Sigmoid colon (tissue), 7 donors: ENCODE measurements at regions of chr1 and their contacts with region 1.

Region 1: DNA sequence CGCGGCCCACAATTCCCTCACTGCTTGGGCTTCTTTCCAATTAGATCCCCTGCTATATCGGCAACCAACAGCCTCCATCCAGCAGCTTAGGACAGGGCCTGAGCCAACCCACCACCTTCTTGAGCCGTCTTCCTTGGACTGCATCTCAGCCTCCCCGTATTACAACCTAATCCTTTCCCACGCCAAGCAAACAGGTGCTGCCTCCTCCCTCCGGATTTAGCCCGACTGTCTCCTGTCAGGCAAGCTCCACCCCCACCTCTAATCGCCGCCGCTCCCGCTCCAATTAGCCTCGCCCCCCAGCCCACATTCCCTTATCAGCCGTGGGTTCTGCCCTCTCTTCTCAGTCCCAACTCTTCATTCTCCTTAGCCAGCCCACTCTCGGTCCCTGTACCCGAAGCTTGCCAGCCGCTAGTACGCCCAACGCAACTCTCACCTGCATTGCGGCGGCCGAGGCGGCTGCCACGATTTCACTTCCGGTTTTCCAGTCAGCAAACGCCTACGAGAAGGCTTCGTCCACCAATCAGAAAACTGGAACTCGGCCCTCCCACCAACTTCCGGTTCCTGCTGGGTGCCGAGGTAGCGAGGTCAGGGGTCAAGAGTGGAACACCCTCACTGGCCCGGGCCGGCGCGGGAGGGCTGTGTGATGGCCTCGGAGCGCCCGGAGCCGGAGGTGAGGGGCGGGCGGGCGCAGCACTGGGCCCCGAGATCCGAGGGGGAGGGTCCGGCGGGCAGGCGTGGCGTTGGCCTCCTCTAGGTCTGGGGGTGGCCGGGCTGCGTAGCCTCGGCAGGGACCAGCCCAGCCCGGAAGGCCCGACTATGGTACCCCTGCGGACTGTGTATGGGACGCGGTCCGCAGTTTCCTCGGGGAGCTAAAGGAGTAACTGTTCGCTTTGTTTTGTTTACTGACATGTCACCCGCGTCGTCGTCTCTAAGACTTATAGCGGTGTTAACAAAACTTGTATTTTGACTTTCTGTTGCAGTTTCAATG is at the starts of genes MED8 and SZT2:
- DNase-seq: peak; percentile 98
- H3K4me3 ChIP-seq: peak within 1 kb of the TSS; percentile 73 to 91 (median 83)
- H3K27ac ChIP-seq: peak within 1 kb of the TSS; percentile 85 to 89 (median 86)
- H3K4me1 ChIP-seq: peaks cover 0 to 32% (median 28%) of the 10 kb centered on the region in 4 donors
- H3K27me3 ChIP-seq: no peaks in the 10 kb centered on the region
- CTCF ChIP-seq: no peak
- EP300 ChIP-seq: no peak
- POLR2A ChIP-seq: peak; percentile 50 to 83
- total RNA-seq, gene MED8: 25.3 to 33.4 (median 29.6) TPM
- total RNA-seq, gene SZT2: 19.1 to 47.4 (median 25.2) TPM

Region 2: GRCh38 chr1:43367904-43368645 is 21.5 kb before region 1 on chr1 and contains the start of gene ELOVL1:
- intact Hi-C with region 1: loop called (anchors 2 kb)
- DNase-seq: peak; percentile 95
- H3K4me3 ChIP-seq: peak within 1 kb of the TSS; percentile 86 to 89 (median 88)
- H3K27ac ChIP-seq: peak within 1 kb of the TSS; percentile 92 to 96 (median 94)
- H3K4me1 ChIP-seq: peaks cover 0 to 29% (median 24%) of the 10 kb centered on the region in 4 donors
- H3K27me3 ChIP-seq: no peaks in the 10 kb centered on the region
- CTCF ChIP-seq: peak in 1 of 4 experiments; percentile 29
- EP300 ChIP-seq: no peak
- POLR2A ChIP-seq: peak in 1 of 2 donors; percentile 72
- total RNA-seq, gene ELOVL1: 26.8 to 39.6 (median 29.5) TPM